WTC11 (cell line): ENCODE measurements at regions of chr17 and their contacts with region 1.

Region 1: DNA sequence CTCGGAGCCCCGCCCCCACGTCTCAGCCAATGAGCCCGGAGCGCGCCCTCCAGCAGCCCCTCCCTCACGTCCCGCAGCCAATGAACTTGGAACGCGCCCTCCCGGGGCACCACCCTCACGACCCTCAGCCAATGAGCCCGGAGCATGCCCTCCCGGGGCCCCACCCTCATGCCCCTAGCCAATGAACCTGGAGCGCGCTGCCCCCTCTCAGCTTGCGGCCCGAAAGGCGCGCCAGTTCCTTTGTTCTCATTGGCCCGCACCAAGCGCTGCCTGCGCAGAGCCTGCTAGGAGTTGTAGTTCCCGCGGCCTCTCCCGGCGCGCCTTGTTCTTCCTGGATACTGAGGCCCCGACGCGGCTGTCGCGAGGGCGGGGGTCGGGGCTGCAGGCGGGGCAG is at the start of gene LRRC45:
- DNase-seq: peak; percentile 100
- ATAC-seq: peak; percentile 93
- H3K4me3 Mint-ChIP-seq: peak within 1 kb of the TSS; percentile 78
- H3K27ac Mint-ChIP-seq: no peak within 1 kb of the TSS
- H3K4me1 Mint-ChIP-seq: peaks cover 11% of the 10 kb centered on the region
- H3K27me3 Mint-ChIP-seq: no peaks in the 10 kb centered on the region; the same call in 1 of the 2 replicates
- CTCF ChIP-seq: no peak
- total RNA-seq, gene LRRC45: 30.5 to 38.1 TPM (median 32.5 TPM) in 3 replicates

Region 2: GRCh38 chr17:81927653-81928543 is 95.1 kb before region 1 on chr17 and contains the start of gene MAFG:
- CTCF ChIA-PET with region 1: interaction called, 16 read pairs
- POLR2A ChIA-PET with region 1: interaction called, 6 read pairs
- DNase-seq: peak; percentile 90
- ATAC-seq: peak; percentile 43
- H3K4me3 Mint-ChIP-seq: peak within 1 kb of the TSS; percentile 75
- H3K27ac Mint-ChIP-seq: no peak within 1 kb of the TSS
- H3K4me1 Mint-ChIP-seq: peaks cover 27% of the 10 kb centered on the region
- H3K27me3 Mint-ChIP-seq: peaks cover 3% of the 10 kb centered on the region; the same call in 1 of the 2 replicates
- CTCF ChIP-seq: no peak
- total RNA-seq, gene MAFG: 24.2 to 29.8 TPM (median 24.3 TPM) in 3 replicates

Region 3: GRCh38 chr17:81959362-81960129 is 63.4 kb before region 1 on chr17:
- CTCF ChIA-PET with region 1: interaction called, 56 read pairs
- POLR2A ChIA-PET with region 1: no interaction called
- DNase-seq: peak; percentile 70
- ATAC-seq: peak; percentile 29
- H3K4me3 Mint-ChIP-seq: peak overlapping the region; percentile 51
- H3K27ac Mint-ChIP-seq: no peak overlapping the region
- H3K4me1 Mint-ChIP-seq: 0 out of 2 replicates have a peak, but pooled peaks cover 4% of the 10 kb centered on the region
- H3K27me3 Mint-ChIP-seq: peaks cover 67% of the 10 kb centered on the region
- CTCF ChIP-seq: 0 out of 2 replicates have a peak, but pooled peaks have one; percentile 17

Region 4: GRCh38 chr17:81991684-81992305 is 31.2 kb before region 1 on chr17:
- CTCF ChIA-PET with region 1: interaction called, 19 read pairs
- POLR2A ChIA-PET with region 1: no interaction called
- DNase-seq: peak; percentile 52
- ATAC-seq: peak; percentile 57
- H3K4me3 Mint-ChIP-seq: no peak overlapping the region
- H3K27ac Mint-ChIP-seq: 0 out of 2 replicates have a peak overlapping the region, but pooled peaks have one; percentile 41
- H3K4me1 Mint-ChIP-seq: peaks cover 21% of the 10 kb centered on the region
- H3K27me3 Mint-ChIP-seq: no peaks in the 10 kb centered on the region
- CTCF ChIP-seq: no peak

Region 5: GRCh38 chr17:82037113-82037888 is 14.3 kb after region 1 on chr17 and contains the start of gene DCXR:
- CTCF ChIA-PET with region 1: interaction called, 119 read pairs
- POLR2A ChIA-PET with region 1: interaction called, 9 read pairs
- DNase-seq: peak; percentile 99
- ATAC-seq: peak; percentile 90
- H3K4me3 Mint-ChIP-seq: peak within 1 kb of the TSS; percentile 75
- H3K27ac Mint-ChIP-seq: peak within 1 kb of the TSS; percentile 95
- H3K4me1 Mint-ChIP-seq: peaks cover 33% of the 10 kb centered on the region
- H3K27me3 Mint-ChIP-seq: peaks cover 10% of the 10 kb centered on the region
- CTCF ChIP-seq: peak; percentile 73
- total RNA-seq, gene DCXR: 114 to 130 TPM (median 120 TPM) in 3 replicates

Region 6: DNA sequence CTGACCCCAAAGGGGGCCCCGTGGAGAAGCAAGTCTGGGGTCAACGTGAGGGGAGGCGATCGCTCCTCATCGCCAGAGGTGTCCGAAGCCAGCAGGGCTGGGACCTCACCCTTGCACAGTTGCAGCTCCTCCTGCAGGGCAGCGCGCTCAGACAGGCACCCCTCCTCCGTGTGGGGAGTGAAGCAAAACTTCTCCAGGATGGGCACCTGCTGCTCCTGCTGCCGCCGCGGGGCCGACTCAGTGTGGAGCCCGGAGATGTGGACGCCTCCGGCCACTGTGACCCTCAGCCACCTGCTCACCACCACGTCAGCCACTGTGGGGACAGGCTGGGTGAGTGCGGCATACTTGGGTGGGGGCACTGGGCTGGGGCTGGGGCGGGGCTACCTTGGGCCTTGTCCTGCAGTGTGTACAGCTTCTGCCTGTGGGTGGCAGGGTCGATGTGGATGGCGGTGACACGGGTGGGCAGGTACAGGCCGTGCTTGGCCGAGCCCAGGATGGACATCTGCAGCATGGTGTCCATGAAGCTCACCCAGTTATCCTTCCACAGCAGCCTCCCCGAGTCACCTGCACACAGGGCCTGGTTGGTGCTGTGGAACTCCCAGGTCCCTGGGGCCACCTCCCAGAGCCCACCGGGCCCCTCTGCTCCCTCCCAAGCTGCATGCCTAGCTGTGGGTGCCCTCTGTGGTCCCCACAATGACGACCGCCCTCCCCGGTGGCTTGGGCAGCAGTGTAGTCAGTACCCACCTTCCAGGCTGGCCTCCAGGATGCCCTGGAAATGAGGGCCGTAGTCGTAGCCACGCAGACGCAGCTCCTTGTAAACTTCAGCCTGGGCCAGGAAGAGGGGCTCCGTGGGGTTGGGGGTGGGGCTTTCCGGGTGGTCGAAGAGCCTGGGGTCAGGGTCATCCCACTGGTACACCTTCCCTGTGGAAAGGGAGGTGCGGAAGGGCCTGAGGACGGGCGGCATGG is 64.2 kb after region 1 on chr17:
- CTCF ChIA-PET with region 1: no interaction called
- POLR2A ChIA-PET with region 1: no interaction called
- DNase-seq: no peak
- ATAC-seq: no peak
- H3K4me3 Mint-ChIP-seq: no peak overlapping the region
- H3K27ac Mint-ChIP-seq: no peak overlapping the region
- H3K4me1 Mint-ChIP-seq: no peaks in the 10 kb centered on the region
- H3K27me3 Mint-ChIP-seq: no peaks in the 10 kb centered on the region
- CTCF ChIP-seq: no peak

Region 7: GRCh38 chr17:82145550-82146190 is 122.7 kb after region 1 on chr17:
- CTCF ChIA-PET with region 1: no interaction called
- POLR2A ChIA-PET with region 1: no interaction called
- DNase-seq: no peak
- ATAC-seq: no peak
- H3K4me3 Mint-ChIP-seq: no peak overlapping the region
- H3K27ac Mint-ChIP-seq: no peak overlapping the region
- H3K4me1 Mint-ChIP-seq: no peaks in the 10 kb centered on the region
- H3K27me3 Mint-ChIP-seq: no peaks in the 10 kb centered on the region
- CTCF ChIP-seq: no peak

Region 8: GRCh38 chr17:82332669-82333278 is 309.8 kb after region 1 on chr17:
- CTCF ChIA-PET with region 1: no interaction called
- POLR2A ChIA-PET with region 1: no interaction called
- DNase-seq: no peak
- ATAC-seq: peak; percentile 12; the same call in 1 of the 2 replicates
- H3K4me3 Mint-ChIP-seq: peak overlapping the region; percentile 61
- H3K27ac Mint-ChIP-seq: no peak overlapping the region
- H3K4me1 Mint-ChIP-seq: peaks cover 22% of the 10 kb centered on the region
- H3K27me3 Mint-ChIP-seq: peaks cover 72% of the 10 kb centered on the region
- CTCF ChIP-seq: no peak